ENCODE measurements at regions of chr21 and their contacts with region 1.

Region 1: DNA sequence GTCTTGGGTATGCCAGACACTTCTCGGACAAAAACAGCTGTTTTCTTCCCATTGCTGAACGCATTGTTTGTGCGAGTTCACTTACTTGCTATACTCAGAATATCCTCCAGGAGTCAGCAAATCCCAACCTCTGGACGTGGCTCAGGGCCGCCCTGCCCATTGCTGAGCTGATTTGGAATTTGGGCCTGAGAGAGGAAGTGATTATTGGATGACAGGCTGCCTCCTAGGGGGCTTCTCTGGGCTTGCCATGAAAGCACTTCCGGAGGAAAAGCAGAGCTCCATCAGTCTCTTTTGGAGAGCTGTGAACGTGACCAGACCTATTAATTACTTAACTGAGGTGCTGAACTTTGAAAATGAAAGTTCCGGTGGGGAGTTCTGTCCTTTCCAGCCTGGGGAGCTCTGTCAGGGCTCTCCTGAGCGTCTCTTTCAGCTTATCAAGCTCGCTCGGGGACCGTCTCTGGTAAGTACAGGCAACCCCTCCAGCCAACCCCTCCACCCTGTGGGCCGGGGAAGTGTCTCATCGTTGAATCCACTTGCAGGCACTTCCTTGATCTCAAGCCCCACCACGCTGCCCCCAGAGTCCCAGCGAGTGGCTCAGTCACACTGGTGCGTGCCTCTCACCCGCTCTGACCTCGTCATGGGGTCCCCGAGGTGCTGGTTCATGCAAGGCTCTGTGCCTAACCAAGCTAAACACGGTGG is 76.9 kb downstream of the CLIC6 start:
- DNase-seq: peak; percentile 48 to 61
- ATAC-seq: peak; percentile 87 to 90
- H3K4me3 ChIP-seq: peak overlapping the region in 1 of 4 donors; percentile 36
- H3K27ac ChIP-seq: peak overlapping the region in 1 of 4 donors; percentile 55
- H3K4me1 ChIP-seq: peaks cover 5 to 17% of the 10 kb centered on the region in 2 donors
- H3K27me3 ChIP-seq: no peaks in the 10 kb centered on the region
- CTCF ChIP-seq: peak; percentile 80 to 91 (median 88)
- POLR2A ChIP-seq: no peak

Region 2: DNA sequence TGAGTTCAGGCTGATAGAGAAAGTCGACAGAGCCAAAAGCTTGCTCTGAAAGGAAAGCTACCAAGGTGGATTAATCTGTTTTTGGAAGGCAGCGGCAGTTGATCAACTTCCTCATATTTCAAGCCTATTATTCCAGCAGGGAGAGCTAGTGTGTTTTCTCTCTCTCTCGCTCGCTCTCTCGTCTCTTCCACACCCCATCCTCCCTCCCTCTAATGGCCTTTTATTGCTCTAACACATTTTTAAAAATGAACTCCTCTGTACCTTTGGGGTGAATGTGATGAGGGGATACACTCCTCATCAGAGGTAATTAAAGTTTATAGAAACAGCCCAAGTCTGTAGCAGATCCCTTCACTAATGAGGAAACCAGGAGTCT is 49.5 kb after region 1 on chr21:
- in situ Hi-C with region 1: no loop called
- intact Hi-C with region 1: loop called (anchors 2 kb)
- DNase-seq: peak in 1 of 2 donors; percentile 49
- ATAC-seq: peak; percentile 77 to 80
- H3K4me3 ChIP-seq: peak overlapping the region in 1 of 4 donors; percentile 9
- H3K27ac ChIP-seq: peak overlapping the region; percentile 78 to 88 (median 84)
- H3K4me1 ChIP-seq: peaks cover 31 to 42% of the 10 kb centered on the region in 2 donors
- H3K27me3 ChIP-seq: no peaks in the 10 kb centered on the region
- CTCF ChIP-seq: peak in 4 of 5 experiments; percentile 18 to 30 (median 24)
- POLR2A ChIP-seq: no peak

Region 3: DNA sequence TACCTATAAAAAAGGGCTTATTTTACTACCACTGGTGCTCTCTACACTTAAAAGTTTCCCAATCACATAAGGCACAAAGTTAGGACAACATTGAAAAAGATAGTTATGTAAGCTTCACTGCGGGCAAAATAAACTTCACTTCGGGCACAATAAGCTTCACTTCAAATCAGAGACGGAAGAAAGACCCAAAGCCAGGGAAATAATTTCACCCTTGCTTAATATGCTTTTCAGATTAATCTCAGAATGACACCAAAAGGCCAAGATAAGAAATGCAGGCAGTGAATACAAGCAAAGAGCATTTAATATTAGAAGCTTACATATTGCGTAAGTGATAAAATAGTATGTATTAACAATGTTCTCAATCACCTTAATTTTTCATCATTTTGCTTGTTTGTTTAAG is 870.4 kb after region 1 on chr21:
- in situ Hi-C with region 1: no loop called
- intact Hi-C with region 1: loop called (anchors 10 kb)
- DNase-seq: no peak
- ATAC-seq: no peak
- H3K4me3 ChIP-seq: no peak overlapping the region
- H3K27ac ChIP-seq: no peak overlapping the region
- H3K4me1 ChIP-seq: no peaks in the 10 kb centered on the region
- H3K27me3 ChIP-seq: no peaks in the 10 kb centered on the region
- CTCF ChIP-seq: peak in 2 of 5 experiments; percentile 18 to 34
- POLR2A ChIP-seq: no peak

Region 4: GRCh38 chr21:35840197-35840799 is 1094.6 kb after region 1 on chr21:
- in situ Hi-C with region 1: loop called (anchors 10 to 25 kb)
- intact Hi-C with region 1: loop called (anchors 1 kb)
- DNase-seq: peak; percentile 26 to 45
- ATAC-seq: peak; percentile 46 to 68
- H3K4me3 ChIP-seq: no peak overlapping the region
- H3K27ac ChIP-seq: peak overlapping the region in 1 of 4 donors; percentile 5
- H3K4me1 ChIP-seq: peaks cover 0 to 4% of the 10 kb centered on the region in 2 donors
- H3K27me3 ChIP-seq: no peaks in the 10 kb centered on the region
- CTCF ChIP-seq: peak; percentile 43 to 78 (median 63)
- POLR2A ChIP-seq: no peak

Region 5: GRCh38 chr21:35940074-35940927 is 1194.6 kb after region 1 on chr21:
- in situ Hi-C with region 1: loop called in 2 of 4 experiments (anchors 10 kb)
- intact Hi-C with region 1: loop called (anchors 1 kb)
- DNase-seq: peak; percentile 12 to 32
- ATAC-seq: peak; percentile 94 to 99
- H3K4me3 ChIP-seq: no peak overlapping the region
- H3K27ac ChIP-seq: no peak overlapping the region
- H3K4me1 ChIP-seq: peaks cover 4% of the 10 kb centered on the region in 2 donors
- H3K27me3 ChIP-seq: no peaks in the 10 kb centered on the region
- CTCF ChIP-seq: peak in 4 of 5 experiments; percentile 48 to 65 (median 56)
- POLR2A ChIP-seq: no peak

Measured in gastrocnemius medialis (tissue), 4 donors.